ENCODE measurements at regions of chr5 and their contacts with region 1.

Region 1: DNA sequence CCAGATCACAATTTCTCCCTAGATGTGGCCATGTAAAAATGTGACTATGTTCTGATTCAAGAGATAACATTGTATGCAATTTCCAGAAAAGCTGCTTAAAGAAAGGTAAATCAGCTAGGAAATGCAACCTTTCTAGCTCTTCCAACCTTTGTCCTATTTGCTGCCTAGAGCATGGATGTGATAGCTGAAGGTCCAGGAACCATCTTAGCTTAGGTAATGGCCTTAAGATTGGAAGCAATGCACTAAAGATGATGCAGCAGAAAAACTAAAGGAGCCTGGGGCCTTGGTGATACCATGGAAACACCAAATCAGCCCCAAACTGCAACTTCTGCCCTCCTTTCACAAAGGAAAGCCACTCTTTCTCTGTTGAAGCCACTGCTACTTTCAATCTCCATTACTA is 27.0 kb downstream of the CPLANE1 start:
- DNase-seq: no peak
- ATAC-seq: no peak
- H3K4me3 ChIP-seq: no peak overlapping the region
- H3K4me3 Mint-ChIP-seq: no peak overlapping the region
- H3K27ac ChIP-seq: no peak overlapping the region
- H3K27ac Mint-ChIP-seq: no peak overlapping the region
- H3K4me1 ChIP-seq: no peaks in the 10 kb centered on the region
- H3K4me1 Mint-ChIP-seq: no peaks in the 10 kb centered on the region
- H3K27me3 ChIP-seq: no peaks in the 10 kb centered on the region
- H3K27me3 Mint-ChIP-seq: no peaks in the 10 kb centered on the region

Region 2: GRCh38 chr5:37189355-37189754 is 32.8 kb before region 1 on chr5:
- CTCF ChIA-PET with region 1: no interaction called
- POLR2A ChIA-PET with region 1: no interaction called
- DNase-seq: no peak
- ATAC-seq: no peak
- H3K4me3 ChIP-seq: no peak overlapping the region
- H3K4me3 Mint-ChIP-seq: no peak overlapping the region
- H3K27ac ChIP-seq: no peak overlapping the region
- H3K27ac Mint-ChIP-seq: no peak overlapping the region
- H3K4me1 ChIP-seq: no peaks in the 10 kb centered on the region
- H3K4me1 Mint-ChIP-seq: no peaks in the 10 kb centered on the region
- H3K27me3 ChIP-seq: no peaks in the 10 kb centered on the region
- H3K27me3 Mint-ChIP-seq: no peaks in the 10 kb centered on the region

Region 3: DNA sequence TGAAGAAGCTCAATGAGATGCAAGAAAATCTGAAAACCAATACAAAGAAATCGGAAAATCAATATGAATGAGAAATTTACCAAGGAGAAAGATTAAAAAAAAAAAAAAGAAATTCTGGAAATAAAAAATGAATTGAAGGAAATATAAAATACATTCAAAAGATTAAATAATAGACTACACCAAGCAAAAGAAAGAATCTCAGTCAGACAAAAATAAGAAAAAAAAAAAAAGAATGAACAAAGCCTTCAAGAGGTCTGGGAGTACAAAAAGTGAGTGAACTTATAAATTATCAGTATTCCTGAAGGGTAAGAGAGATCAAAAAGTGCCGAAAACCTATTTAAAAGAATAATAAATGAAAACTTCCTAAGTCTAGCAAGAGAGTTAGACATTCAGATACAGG is 12.1 kb after region 1 on chr5:
- CTCF ChIA-PET with region 1: no interaction called
- POLR2A ChIA-PET with region 1: interaction called in 1 of 2 experiments, 13 read pairs
- DNase-seq: no peak
- ATAC-seq: no peak
- H3K4me3 ChIP-seq: no peak overlapping the region
- H3K4me3 Mint-ChIP-seq: no peak overlapping the region
- H3K27ac ChIP-seq: no peak overlapping the region
- H3K27ac Mint-ChIP-seq: no peak overlapping the region
- H3K4me1 ChIP-seq: no peaks in the 10 kb centered on the region
- H3K4me1 Mint-ChIP-seq: no peaks in the 10 kb centered on the region
- H3K27me3 ChIP-seq: no peaks in the 10 kb centered on the region
- H3K27me3 Mint-ChIP-seq: no peaks in the 10 kb centered on the region

Region 4: GRCh38 chr5:37272564-37272963 is 50.4 kb after region 1 on chr5:
- CTCF ChIA-PET with region 1: no interaction called
- POLR2A ChIA-PET with region 1: no interaction called
- DNase-seq: no peak
- ATAC-seq: no peak
- H3K4me3 ChIP-seq: no peak overlapping the region
- H3K4me3 Mint-ChIP-seq: no peak overlapping the region
- H3K27ac ChIP-seq: no peak overlapping the region
- H3K27ac Mint-ChIP-seq: no peak overlapping the region
- H3K4me1 ChIP-seq: no peaks in the 10 kb centered on the region
- H3K4me1 Mint-ChIP-seq: no peaks in the 10 kb centered on the region
- H3K27me3 ChIP-seq: peaks cover 0 to 2% of the 10 kb centered on the region in 2 experiments
- H3K27me3 Mint-ChIP-seq: no peaks in the 10 kb centered on the region

Measured in T-cell (primary cell).